Cardiac septum (tissue), 1 donor: ENCODE measurements at regions of chr11 and their contacts with region 1.

Region 1: DNA sequence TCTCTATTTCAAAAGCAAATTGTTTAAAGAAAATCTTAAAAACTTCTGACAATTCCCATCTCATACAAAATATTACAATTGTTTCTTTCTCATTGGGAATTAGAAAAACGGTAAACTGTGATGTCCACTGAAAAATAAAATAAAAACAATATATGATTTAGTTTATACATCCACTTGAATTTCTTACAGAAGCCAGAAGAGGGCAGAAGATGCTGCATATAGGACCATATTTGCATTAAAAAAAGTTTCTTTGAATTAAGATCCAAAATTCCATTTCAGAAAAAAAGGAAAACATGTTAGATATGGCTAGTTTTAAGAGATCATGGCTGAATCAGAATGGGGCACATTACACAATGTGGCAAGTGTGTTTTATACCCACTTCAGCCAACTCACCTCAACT is 39.3 kb upstream of the LRRC4C start:
- DNase-seq: no peak

Region 2: GRCh38 chr11:41346042-41346441 is 152.7 kb before region 1 on chr11:
- intact Hi-C with region 1: no loop called
- DNase-seq: no peak

Region 3: DNA sequence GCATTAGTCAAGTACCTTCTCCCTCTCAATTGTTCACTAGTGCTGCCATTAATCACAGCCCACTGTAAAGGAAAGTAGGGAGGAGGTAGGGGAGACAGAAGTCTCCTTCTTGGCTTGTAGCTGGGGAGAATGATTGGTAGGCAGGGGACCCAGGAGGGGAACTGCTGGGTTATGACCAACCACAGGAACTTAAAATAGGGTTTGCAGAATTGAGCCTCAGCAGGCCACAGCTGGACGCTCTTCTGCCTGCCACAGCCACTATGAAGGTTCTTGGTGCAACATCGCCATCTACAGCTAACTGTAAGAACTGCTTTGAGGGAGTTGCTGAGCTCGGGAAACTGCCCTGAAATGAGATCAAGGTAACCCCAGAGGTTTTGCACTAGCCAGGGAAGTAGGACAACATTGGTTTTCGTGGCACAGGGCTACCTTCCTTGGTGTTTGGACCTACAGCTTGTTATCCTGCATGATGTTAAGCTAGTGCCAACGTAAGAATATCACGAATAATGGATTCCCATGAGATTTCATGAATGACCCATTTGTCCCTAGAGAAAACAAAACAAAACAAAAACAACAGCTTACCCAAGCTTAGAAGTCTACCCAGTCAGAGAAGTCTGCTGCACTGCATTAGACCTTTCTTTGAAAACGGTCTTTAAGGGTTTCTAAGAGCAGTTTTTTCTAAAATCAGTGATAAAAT is 1026.0 kb after region 1 on chr11:
- intact Hi-C with region 1: loop called (anchors 10 kb)
- DNase-seq: no peak